ENCODE measurements at regions of chr10 and their contacts with region 1.

Region 1: DNA sequence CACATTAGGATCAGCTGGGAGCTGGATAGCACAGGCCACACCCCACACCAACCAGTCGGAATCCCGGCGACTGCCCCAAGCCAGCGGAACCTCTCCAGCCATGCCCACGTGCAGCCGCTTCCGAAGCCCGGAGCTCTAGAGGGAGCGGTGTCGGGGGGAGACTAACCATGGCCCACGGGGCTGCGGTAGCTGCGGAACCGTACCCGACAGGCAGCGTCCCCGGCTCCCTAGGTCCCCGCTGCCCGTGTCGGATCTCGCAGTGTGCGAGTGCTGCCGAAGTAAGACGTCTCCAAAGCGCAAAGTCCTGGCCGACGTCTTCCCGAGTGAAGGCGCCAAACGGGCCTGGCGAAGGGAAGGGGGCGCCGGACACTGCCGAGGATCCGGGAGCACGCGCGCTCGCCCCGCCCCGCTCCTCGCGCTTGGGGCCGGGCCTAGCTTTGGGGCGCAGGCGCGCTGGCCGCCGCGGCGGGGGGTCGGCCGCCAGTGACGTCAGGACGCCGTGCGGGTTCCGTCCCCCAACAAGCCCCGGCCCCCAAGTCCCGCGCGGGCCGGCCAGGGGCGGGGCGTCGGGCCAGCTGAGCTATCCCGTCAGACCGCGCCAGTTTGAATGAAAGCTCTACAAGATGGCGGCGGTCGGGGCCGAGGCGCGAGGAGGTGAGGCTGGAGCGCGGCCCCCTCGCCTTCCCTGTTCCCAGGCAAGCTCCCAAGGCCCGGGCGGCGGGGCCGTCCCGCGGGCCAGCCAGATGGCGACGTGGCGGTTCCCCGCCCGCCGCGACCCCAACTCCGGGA is at the start of gene SUV39H2:
- DNase-seq: peak; percentile 98
- ATAC-seq: peak; percentile 99
- total RNA-seq, gene SUV39H2: 4.1 TPM

Region 2: GRCh38 chr10:14698111-14698828 is 180.2 kb before region 1 on chr10:
- intact Hi-C with region 1: no loop called
- DNase-seq: no peak
- ATAC-seq: no peak

Region 3: DNA sequence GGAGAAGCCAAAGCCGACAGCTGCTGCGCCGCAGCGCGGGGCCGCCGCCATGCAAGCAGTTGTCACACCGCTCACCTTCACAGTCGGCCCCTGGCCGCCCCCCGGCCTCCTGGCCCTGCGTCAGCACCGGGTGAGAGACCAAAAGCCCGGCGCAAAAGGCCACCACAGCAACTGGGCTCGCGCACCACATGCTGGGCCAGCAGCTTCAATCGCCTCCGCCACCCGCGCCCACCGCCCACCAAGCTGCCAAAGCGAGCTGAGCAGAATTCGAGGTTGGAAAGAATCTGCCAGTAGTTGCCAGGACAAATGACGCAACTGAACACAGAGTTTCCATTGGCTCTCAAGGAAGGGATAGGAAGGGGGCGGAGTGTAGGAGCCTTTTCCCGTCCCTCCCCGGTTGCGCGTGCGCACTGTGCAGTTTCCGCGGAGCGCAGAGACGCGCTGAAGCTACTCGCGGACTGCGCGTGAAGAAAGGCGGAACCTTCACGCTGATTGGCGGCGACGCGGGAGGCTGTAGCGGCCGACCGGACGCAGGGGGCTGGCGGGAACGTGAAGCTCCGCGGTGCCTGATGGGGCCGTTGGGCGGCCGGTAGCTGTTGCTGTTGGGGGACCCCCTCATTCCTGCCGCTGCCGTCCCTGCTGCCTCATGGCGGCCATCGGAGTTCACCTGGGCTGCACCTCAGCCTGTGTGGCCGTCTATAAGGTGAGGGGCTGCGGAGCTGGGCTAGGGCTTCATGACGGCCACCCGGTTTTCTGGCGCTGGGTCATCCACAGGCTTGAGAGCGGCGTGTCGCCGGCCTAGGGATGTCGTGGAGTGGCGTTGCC is 40.5 kb before region 1 on chr10 and contains the starts of genes CDNF, HSPA14 and MSANTD7:
- intact Hi-C with region 1: loop called (anchors 5 kb)
- DNase-seq: peak; percentile 100
- ATAC-seq: peak; percentile 99
- total RNA-seq, gene CDNF: 2.3 TPM
- total RNA-seq, gene HSPA14: 7.3 TPM
- total RNA-seq, gene MSANTD7: 4.4 TPM

Region 4: GRCh38 chr10:14954001-14954770 is 75.7 kb after region 1 on chr10 and contains the start of gene DCLRE1C:
- intact Hi-C with region 1: loop called (anchors 5 kb)
- DNase-seq: peak; percentile 95
- ATAC-seq: peak; percentile 99
- total RNA-seq, gene DCLRE1C: 2.2 TPM